Gastrocnemius medialis (tissue), 4 donors: ENCODE measurements at regions of chr9 and their contacts with region 1.

Region 1: GRCh38 chr9:69961830-69962229 is 81.8 kb upstream of the MAMDC2 start:
- DNase-seq: no peak
- ATAC-seq: no peak
- H3K4me3 ChIP-seq: no peak overlapping the region
- H3K27ac ChIP-seq: no peak overlapping the region
- H3K4me1 ChIP-seq: no peaks in the 10 kb centered on the region
- H3K27me3 ChIP-seq: no peaks in the 10 kb centered on the region
- CTCF ChIP-seq: no peak
- POLR2A ChIP-seq: no peak

Region 2: DNA sequence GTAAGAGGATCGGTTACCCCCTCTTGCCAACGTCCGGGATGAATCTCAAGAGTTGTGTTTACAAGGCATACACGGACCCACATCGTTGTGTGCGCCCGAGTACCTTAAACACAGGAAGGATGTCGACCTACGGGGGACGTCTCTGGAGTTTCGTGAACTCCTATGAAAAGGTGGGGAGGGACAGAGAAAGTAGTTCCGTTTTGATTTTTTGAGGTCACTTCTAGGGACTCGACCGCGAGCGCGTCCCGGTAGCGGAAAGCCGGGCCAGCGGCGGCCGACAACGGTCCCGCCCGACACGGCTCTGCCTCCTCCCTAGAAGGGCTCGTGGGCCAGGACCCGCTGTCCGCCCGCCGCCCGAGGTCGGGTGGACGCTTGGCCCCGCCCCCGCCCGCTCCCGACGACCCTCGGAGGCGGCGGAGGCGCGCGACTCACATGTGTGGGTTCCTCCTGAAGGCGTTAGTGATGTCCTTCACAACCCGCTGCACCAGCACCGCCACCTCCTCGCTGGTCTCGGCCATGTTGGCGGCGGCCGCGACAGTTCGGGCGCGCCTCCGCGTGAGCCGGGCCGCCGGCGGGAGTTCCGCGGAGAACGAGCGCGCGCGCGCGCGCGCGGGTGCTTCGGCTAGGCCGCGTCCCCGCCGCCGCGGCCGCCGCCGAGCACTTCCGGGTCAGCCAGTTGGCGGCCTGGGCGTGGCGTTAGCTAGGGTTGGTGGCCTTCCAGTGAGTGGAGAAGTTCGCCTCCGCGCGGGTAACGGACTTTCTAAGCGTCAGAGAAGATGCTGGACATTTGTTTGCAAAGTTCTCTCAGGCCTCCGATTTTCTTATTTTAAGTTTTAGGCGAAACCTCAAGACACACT is 202.2 kb before region 1 on chr9 and contains the start of gene PTAR1:
- in situ Hi-C with region 1: no loop called
- intact Hi-C with region 1: no loop called
- DNase-seq: peak; percentile 78 to 86
- ATAC-seq: peak; percentile 92 to 94
- H3K4me3 ChIP-seq: peak within 1 kb of the TSS; percentile 75 to 87 (median 77)
- H3K27ac ChIP-seq: peak within 1 kb of the TSS; percentile 92 to 98 (median 94)
- H3K4me1 ChIP-seq: peaks cover 30 to 39% of the 10 kb centered on the region in 2 donors
- H3K27me3 ChIP-seq: no peaks in the 10 kb centered on the region
- CTCF ChIP-seq: peak in 1 of 5 experiments; percentile 31
- POLR2A ChIP-seq: peak; percentile 74 to 79
- total RNA-seq, gene PTAR1: 26.5 to 52.4 (median 40.6) TPM

Region 3: GRCh38 chr9:69877854-69878514 is 83.8 kb before region 1 on chr9:
- in situ Hi-C with region 1: no loop called
- intact Hi-C with region 1: no loop called
- DNase-seq: no peak
- ATAC-seq: peak in 1 of 2 donors; percentile 72
- H3K4me3 ChIP-seq: no peak overlapping the region
- H3K27ac ChIP-seq: no peak overlapping the region
- H3K4me1 ChIP-seq: peaks cover 20% of the 10 kb centered on the region in 2 donors
- H3K27me3 ChIP-seq: no peaks in the 10 kb centered on the region
- CTCF ChIP-seq: peak in 4 of 5 experiments; percentile 37 to 56 (median 44)
- POLR2A ChIP-seq: no peak

Region 4: GRCh38 chr9:70003901-70004714 is 42.3 kb after region 1 on chr9:
- in situ Hi-C with region 1: no loop called
- intact Hi-C with region 1: no loop called
- DNase-seq: no peak
- ATAC-seq: no peak
- H3K4me3 ChIP-seq: no peak overlapping the region
- H3K27ac ChIP-seq: no peak overlapping the region
- H3K4me1 ChIP-seq: no peaks in the 10 kb centered on the region
- H3K27me3 ChIP-seq: no peaks in the 10 kb centered on the region
- CTCF ChIP-seq: no peak
- POLR2A ChIP-seq: no peak

Region 5: DNA sequence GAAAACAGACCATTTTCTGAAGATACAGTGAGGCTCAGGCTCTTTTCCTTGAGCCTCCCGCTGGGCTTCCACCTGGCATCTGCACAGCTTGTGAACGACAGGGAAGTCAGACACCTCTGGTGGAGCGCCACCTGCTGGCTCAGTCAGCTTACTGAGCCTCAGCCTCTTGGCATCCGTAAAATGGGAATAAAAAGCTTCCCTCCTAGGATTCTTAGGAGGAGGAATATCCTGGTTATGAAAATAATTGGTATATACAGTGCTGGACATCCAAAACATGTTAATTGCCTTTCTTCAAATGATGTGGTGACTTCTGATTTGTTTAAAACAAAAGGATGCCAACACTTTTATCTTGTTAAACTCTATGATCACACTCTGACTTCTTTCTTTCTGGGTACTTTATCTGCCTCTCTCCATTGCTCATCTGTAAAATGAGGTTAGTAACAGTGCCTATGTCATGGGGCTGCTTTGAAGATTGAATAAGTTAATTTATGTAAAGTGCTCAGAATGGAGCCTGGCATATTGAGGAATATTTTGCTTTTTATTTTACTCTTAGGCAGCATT is 149.3 kb after region 1 on chr9:
- in situ Hi-C with region 1: loop called in 1 of 4 experiments (anchors 10 kb)
- intact Hi-C with region 1: no loop called
- DNase-seq: peak; percentile 57 to 68
- ATAC-seq: peak; percentile 74 to 90
- H3K4me3 ChIP-seq: no peak overlapping the region
- H3K27ac ChIP-seq: peak overlapping the region in 1 of 4 donors; percentile 0
- H3K4me1 ChIP-seq: peaks cover 0 to 10% of the 10 kb centered on the region in 2 donors
- H3K27me3 ChIP-seq: no peaks in the 10 kb centered on the region
- CTCF ChIP-seq: peak; percentile 52 to 82 (median 78)
- POLR2A ChIP-seq: no peak